Left lung (tissue), 14 donors: ENCODE measurements at regions of chr3 and their contacts with region 1.

Region 1: DNA sequence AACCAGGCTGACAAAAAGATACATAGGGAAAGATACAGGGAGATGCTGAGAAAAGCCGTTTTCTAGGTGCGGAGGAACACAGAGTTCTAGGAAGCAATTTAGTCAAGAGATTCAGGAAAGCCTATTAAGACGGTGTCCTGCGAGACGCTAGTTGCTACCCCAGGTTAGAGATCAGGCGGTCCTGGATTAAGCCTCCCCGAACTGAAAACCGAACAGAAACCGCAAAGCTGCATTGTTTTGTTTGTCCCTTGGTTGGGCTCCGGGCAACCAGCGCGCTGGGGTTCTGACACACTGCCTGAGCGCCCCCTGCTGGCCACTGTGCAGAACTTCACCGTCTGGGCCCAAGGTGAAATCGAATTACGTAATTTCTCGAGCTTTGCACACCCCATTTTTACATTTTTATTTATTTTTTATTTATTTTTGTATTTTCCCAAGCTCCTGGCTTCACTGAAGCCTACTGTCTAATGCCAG is 37.3 kb upstream of the NDUFB4 start:
- DNase-seq: peak; percentile 89 to 95 (median 94)
- ATAC-seq: peak; percentile 94
- H3K4me3 ChIP-seq: peak overlapping the region; percentile 37 to 42
- H3K27ac ChIP-seq: peak overlapping the region; percentile 76 to 84
- H3K4me1 ChIP-seq: peaks cover 5 to 18% of the 10 kb centered on the region in 2 donors
- H3K27me3 ChIP-seq: no peaks in the 10 kb centered on the region
- CTCF ChIP-seq: peak; percentile 97 to 99

Region 2: GRCh38 chr3:120245386-120245785 is 313.4 kb before region 1 on chr3:
- intact Hi-C with region 1: loop called in 1 of 2 experiments (anchors 2 kb)
- DNase-seq: no peak
- ATAC-seq: no peak
- H3K4me3 ChIP-seq: no peak overlapping the region
- H3K27ac ChIP-seq: no peak overlapping the region
- H3K4me1 ChIP-seq: no peaks in the 10 kb centered on the region
- H3K27me3 ChIP-seq: no peaks in the 10 kb centered on the region
- CTCF ChIP-seq: no peak

Region 3: DNA sequence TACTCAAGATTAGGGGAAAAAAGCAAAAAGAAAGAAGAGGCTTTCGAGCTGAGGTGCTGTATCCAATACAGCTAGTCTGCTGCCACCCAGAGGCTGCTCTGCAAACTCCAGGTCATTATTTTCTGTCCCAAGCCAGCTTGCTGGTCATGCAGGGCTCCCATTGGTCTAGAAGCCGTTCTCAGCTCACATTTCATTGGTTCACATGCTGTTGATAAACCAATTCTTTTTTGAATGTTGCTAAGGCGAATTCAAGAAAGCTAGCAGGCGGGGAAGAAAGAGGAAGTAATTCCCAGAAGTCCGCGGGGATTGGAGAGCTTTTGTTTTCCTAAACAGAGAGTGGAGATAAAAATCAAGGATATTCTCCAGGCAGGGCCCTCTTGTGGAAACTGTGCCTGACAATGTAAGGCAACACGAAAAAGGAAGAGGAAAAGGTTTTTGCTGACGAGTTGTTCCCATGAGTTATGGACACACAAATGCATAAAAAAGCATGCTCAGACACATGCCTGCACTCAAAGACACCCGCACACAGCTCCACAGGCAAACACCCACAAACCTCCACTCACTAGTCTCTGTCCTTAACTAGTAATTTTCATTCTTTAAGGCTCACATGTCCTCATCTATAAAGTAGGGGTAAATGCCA is 141.4 kb before region 1 on chr3:
- intact Hi-C with region 1: loop called in 1 of 2 experiments (anchors 5 kb)
- DNase-seq: peak in 3 of 4 donors; percentile 93 to 98 (median 93)
- ATAC-seq: peak; percentile 98
- H3K4me3 ChIP-seq: peak overlapping the region; percentile 2 to 30
- H3K27ac ChIP-seq: peak overlapping the region; percentile 60 to 82
- H3K4me1 ChIP-seq: peaks cover 2 to 25% of the 10 kb centered on the region in 2 donors
- H3K27me3 ChIP-seq: no peaks in the 10 kb centered on the region
- CTCF ChIP-seq: peak; percentile 68 to 80

Region 4: DNA sequence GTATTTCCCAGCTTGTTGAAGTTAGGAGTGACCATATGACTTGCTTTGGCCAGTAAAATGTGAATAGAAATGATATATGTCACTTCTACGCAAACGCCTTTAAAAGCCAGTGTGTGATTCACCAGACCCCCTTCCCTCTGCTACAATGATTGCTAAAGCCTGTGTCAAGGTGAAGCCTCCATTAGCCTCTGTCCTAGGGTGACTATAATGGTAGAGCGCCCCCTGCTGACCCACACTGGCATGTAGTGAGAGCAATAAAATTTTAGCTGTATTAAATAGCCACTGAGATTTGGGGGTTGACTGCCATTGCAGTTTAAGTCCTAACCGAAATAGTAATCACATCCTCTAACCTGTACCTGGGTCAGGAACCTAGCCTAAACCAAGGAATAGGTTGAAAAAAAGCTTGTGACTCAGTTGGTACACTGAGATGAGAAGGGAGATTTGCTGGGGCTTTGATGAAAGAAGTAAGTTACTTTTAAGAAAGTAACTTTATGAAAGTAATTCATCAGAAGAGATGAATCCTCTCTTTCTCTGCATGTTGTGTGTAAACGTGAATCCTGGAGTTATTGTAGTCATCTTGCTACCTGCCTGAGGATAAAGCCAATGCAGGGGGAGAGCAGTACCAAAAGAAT is 236.3 kb after region 1 on chr3:
- intact Hi-C with region 1: loop called in 1 of 2 experiments (anchors 2 kb)
- DNase-seq: peak; percentile 14 to 73 (median 59)
- ATAC-seq: peak; percentile 97
- H3K4me3 ChIP-seq: no peak overlapping the region
- H3K27ac ChIP-seq: no peak overlapping the region
- H3K4me1 ChIP-seq: no peaks in the 10 kb centered on the region
- H3K27me3 ChIP-seq: no peaks in the 10 kb centered on the region
- CTCF ChIP-seq: peak; percentile 66